ENCODE measurements at regions of chr3 and their contacts with region 1.

Region 1: GRCh38 chr3:128969993-128970739 is 23.7 kb downstream of the CFAP92 start:
- DNase-seq: peak; percentile 56
- H3K4me3 ChIP-seq: no peak overlapping the region
- H3K27ac ChIP-seq: no peak overlapping the region
- H3K4me1 ChIP-seq: no peaks in the 10 kb centered on the region
- H3K27me3 ChIP-seq: no peaks in the 10 kb centered on the region
- CTCF ChIP-seq: peak; percentile 67 to 93 (median 76)
- POLR2A ChIP-seq: no peak

Region 2: GRCh38 chr3:129249276-129250065 is 279.3 kb after region 1 on chr3 and contains the start of gene COPG1:
- intact Hi-C with region 1: loop called (anchors 10 kb)
- DNase-seq: peak; percentile 90
- H3K4me3 ChIP-seq: peak within 1 kb of the TSS; percentile 82 to 88
- H3K27ac ChIP-seq: peak within 1 kb of the TSS; percentile 60 to 78
- H3K4me1 ChIP-seq: peaks cover 21% of the 10 kb centered on the region
- H3K27me3 ChIP-seq: no peaks in the 10 kb centered on the region
- CTCF ChIP-seq: no peak
- POLR2A ChIP-seq: peak; percentile 82
- total RNA-seq, gene COPG1: 94.5 to 98.2 TPM

Measured in testis (tissue), 5 donors.